ENCODE measurements at regions of chr5 and their contacts with region 1.

Region 1: DNA sequence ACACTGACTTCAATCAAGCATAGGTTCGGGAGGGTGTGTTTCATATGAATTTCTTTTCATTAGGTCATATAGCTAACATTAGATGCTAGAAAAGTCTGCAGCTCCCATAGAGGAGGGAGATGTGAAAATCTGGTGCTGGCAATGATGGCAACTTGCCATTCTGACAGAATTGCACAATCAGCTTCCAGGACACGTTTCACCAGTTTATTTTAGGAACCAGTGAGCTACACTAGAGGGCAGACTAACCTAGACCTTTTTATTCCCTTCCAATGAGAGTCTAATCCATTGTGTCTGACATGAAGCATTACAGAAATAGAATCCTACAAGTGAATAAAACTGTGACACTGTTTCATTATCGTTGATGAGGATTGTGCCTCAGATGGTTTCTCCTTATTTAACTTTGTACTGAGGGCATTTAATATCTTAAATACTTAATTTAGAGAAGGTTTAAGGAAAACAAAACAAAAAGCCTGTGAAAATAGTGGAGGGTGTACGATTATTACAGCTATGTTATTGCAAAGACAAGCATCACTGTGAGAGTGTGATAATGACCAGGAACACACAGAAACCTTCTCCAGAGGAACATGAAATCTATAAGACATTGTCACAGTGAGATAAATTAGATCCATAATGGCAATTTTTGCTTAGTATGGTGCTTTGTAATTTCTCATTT is 363.3 kb upstream of the RPS23 start:
- DNase-seq: peak; percentile 24
- ATAC-seq: peak; percentile 62
- H3K4me3 Mint-ChIP-seq: no peak overlapping the region
- H3K27ac Mint-ChIP-seq: no peak overlapping the region
- H3K4me1 Mint-ChIP-seq: peaks cover 1% of the 10 kb centered on the region
- H3K27me3 Mint-ChIP-seq: no peaks in the 10 kb centered on the region
- CTCF ChIP-seq: peak; percentile 65

Region 2: DNA sequence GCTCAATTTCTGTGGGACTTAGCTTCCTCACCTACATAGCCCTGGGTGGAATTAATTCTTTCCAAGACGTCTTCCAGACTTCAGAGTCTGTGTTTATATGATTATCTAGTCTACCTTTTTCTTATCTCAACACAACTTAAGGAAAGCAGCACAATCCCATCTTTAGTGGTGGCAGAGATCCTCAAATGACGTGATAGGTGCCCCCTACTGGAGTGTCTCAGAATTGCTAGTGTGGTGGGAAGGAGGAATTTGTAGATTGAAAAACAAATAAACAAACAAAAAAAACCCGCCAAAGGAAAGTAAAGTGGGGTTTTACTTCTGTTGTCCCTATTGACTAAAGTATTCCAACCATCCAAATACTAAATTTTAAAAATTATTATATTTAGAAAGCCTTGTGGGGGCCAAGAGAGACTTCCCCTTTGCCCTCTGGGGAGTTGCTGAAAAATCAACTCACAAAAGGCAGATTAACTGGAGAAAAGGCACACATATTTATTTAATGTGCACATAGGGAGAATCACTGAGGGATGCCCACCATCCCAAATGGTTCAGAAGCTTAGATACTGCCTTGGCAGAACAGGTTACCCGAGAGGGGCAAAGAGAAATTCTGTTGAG is 152.4 kb after region 1 on chr5:
- CTCF ChIA-PET with region 1: interaction called, 11 read pairs
- POLR2A ChIA-PET with region 1: no interaction called
- intact Hi-C with region 1: loop called (anchors 5 kb)
- DNase-seq: peak; percentile 60
- ATAC-seq: peak; percentile 37
- H3K4me3 Mint-ChIP-seq: no peak overlapping the region
- H3K27ac Mint-ChIP-seq: no peak overlapping the region
- H3K4me1 Mint-ChIP-seq: no peaks in the 10 kb centered on the region
- H3K27me3 Mint-ChIP-seq: no peaks in the 10 kb centered on the region
- CTCF ChIP-seq: peak; percentile 82

Region 3: DNA sequence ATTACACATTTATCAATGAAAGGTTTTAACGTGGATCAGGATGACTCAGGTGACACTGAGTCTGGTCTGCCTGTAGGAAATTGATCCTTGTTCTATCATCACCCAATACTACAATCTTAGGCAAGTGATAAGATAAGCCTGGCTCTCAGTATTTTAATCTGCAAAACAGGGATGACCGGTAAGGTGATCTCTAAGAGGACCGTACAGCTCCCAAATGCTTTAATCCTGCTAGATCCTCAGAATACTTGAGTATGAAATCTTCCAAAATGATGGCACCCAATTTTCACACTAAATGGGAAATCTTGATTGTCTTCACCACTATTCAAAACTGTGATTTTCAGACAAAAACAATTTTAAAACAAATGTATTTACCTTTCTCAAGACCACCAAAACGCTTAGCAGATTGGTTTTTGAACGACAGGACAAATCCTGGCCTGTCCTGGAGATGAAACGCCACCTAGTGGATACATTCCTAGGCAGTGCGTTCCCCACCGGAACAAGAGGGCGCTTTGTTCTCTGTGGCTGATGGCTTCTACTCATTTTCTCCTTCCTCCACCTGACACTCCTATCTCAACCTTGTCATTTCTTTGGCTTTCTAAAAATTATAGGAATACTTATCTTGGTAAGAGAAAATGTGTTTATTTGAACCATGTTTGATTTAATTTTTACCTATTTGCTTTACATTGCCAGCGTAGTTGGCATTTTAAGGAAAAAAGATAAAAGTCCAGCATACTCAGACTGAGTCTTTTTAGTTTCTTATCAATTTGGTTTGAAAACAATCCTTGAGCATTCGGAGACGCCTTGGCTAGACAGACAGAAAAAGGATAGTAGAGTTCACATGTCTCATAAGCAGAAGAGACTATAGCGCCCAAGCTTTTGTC is 788.9 kb after region 1 on chr5:
- CTCF ChIA-PET with region 1: interaction called, 4 read pairs
- POLR2A ChIA-PET with region 1: no interaction called
- intact Hi-C with region 1: loop called (anchors 10 kb)
- DNase-seq: peak; percentile 70
- ATAC-seq: peak; percentile 79
- H3K4me3 Mint-ChIP-seq: no peak overlapping the region
- H3K27ac Mint-ChIP-seq: no peak overlapping the region
- H3K4me1 Mint-ChIP-seq: no peaks in the 10 kb centered on the region
- H3K27me3 Mint-ChIP-seq: peaks cover 2% of the 10 kb centered on the region
- CTCF ChIP-seq: peak; percentile 76

Region 4: GRCh38 chr5:83564069-83564749 is 922.7 kb after region 1 on chr5:
- CTCF ChIA-PET with region 1: interaction called, 3 read pairs
- POLR2A ChIA-PET with region 1: no interaction called
- intact Hi-C with region 1: loop called (anchors 10 kb)
- DNase-seq: no peak
- ATAC-seq: no peak
- H3K4me3 Mint-ChIP-seq: no peak overlapping the region
- H3K27ac Mint-ChIP-seq: no peak overlapping the region
- H3K4me1 Mint-ChIP-seq: no peaks in the 10 kb centered on the region
- H3K27me3 Mint-ChIP-seq: peaks cover 13% of the 10 kb centered on the region
- CTCF ChIP-seq: peak; percentile 76

Measured in activated CD8-positive, alpha-beta T cell treated with anti-CD3 and anti-CD28 coated beads for 36 hours (primary cell).